ENCODE measurements at regions of chr7 and their contacts with region 1.

Region 1: GRCh38 chr7:1044191-1045068 is at the start of gene GPR146:
- DNase-seq: peak; percentile 85
- H3K4me3 Mint-ChIP-seq: peak within 1 kb of the TSS; percentile 83
- H3K27ac Mint-ChIP-seq: peak within 1 kb of the TSS; percentile 48
- H3K4me1 Mint-ChIP-seq: peaks cover 66% of the 10 kb centered on the region
- H3K27me3 Mint-ChIP-seq: peaks cover 1% of the 10 kb centered on the region
- total RNA-seq, gene GPR146: 2.2 and 2.8 TPM in 2 replicates

Region 2: DNA sequence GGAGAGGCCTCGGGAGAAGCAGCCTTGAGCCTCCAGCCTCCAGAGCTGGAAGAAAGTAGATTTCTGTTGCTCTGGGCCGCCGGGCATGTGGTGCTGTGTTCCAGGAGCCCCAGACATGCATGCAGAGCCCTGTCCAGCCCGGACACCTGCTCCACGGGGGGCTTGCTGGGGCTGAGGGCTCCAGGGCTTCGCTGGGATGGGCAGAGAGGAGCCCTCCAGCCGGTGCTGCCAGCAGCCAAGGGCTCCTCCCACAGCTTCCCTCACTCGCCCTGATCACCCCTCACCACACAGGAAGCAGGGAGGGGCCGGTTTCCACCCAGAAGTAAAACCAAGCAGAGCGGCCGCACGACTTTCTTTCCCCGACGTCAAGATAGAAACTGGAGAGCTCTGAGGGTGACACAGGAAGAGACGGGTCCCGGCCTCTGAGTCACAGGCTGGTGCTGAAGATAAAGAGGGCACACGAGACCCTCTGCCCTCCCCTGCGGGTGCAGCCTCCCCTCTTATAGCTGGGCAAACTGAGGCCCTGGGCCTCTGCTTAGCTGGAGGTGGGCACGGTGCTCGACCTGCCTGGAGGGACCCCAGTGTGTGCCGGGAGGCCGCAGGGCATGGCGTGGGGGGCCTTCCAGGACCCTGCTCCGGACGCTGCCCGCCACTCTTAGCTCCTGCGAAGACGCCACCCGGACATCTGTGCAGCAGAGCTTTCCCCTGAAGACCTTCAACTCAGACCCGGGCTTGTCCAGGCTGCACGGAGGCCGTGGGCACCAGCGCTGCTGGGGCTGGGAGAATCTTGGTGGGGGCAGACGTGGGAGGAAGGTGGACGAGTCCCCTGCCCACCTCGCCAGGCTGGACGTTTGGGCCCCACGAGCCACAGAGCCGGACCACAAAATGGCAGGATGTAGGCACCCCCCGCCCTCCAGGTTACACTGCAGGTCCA is 121.1 kb before region 1 on chr7:
- intact Hi-C with region 1: loop called (anchors 5 kb)
- DNase-seq: peak; percentile 89
- H3K4me3 Mint-ChIP-seq: peak overlapping the region; percentile 81
- H3K27ac Mint-ChIP-seq: peak overlapping the region; percentile 94
- H3K4me1 Mint-ChIP-seq: peaks cover 20% of the 10 kb centered on the region
- H3K27me3 Mint-ChIP-seq: peaks cover 4% of the 10 kb centered on the region

Region 3: GRCh38 chr7:1028031-1028770 is 16.2 kb before region 1 on chr7:
- intact Hi-C with region 1: loop called (anchors 1 kb)
- DNase-seq: peak; percentile 82
- H3K4me3 Mint-ChIP-seq: peak overlapping the region; percentile 82
- H3K27ac Mint-ChIP-seq: peak overlapping the region; percentile 91
- H3K4me1 Mint-ChIP-seq: peaks cover 17% of the 10 kb centered on the region
- H3K27me3 Mint-ChIP-seq: no peaks in the 10 kb centered on the region

Region 4: DNA sequence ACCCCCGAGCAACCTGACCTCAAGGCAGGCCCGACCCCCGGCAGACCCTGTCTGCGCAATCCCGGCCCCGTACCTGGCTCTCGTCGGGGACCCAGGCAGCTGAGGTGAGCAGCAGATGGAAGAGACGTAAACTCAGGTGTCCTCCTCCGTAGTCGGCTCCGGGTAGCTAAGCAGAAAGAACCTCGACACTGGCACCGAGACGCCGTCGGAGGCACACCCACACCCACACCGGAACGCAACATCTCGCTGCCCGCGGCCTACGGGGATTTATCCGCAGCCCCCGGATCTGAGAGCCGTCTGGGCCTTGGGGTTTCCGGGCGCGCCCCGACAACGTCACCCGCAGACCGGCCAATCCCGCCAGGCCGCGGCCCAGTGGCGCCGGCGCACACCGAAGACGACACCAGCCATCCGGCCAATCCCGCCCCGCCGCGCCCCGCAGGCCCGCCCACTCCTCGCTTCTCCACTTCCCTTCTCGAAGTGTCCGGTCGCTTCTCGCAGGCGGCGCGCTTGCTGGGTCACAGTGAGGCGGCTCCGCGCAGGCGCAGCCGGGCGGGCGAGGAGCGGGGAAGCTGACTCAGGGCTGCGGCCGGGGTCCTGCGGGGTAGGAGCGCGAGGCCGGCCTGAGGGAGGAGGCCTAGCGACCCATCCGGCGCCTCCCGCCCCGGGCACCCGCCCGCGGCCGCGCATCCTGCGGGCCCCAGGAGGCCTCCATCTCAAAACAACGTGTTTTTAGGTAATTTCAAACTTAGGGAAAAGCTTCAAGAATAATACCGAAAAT is 115.7 kb after region 1 on chr7 and contains the start of gene ZFAND2A:
- intact Hi-C with region 1: loop called (anchors 1 kb)
- DNase-seq: peak; percentile 99
- H3K4me3 Mint-ChIP-seq: peak within 1 kb of the TSS; percentile 93
- H3K27ac Mint-ChIP-seq: peak within 1 kb of the TSS; percentile 80
- H3K4me1 Mint-ChIP-seq: peaks cover 28% of the 10 kb centered on the region
- H3K27me3 Mint-ChIP-seq: no peaks in the 10 kb centered on the region
- total RNA-seq, gene ZFAND2A: 21.2 and 21.9 TPM in 2 replicates

Region 5: GRCh38 chr7:1175967-1176851 is 131.8 kb after region 1 on chr7:
- intact Hi-C with region 1: no loop called
- DNase-seq: peak; percentile 74
- H3K4me3 Mint-ChIP-seq: peak overlapping the region; percentile 19
- H3K27ac Mint-ChIP-seq: peak overlapping the region; percentile 9
- H3K4me1 Mint-ChIP-seq: peaks cover 12% of the 10 kb centered on the region
- H3K27me3 Mint-ChIP-seq: peaks cover 11% of the 10 kb centered on the region